ENCODE measurements at regions of chr15 and their contacts with region 1.

Region 1: GRCh38 chr15:65869127-65869953 is at the start of gene RAB11A:
- DNase-seq: peak; percentile 86 to 98 (median 94)
- ATAC-seq: peak; percentile 88
- H3K4me3 ChIP-seq: peak within 1 kb of the TSS; percentile 84 to 98
- H3K4me3 Mint-ChIP-seq: peak within 1 kb of the TSS; percentile 99
- H3K27ac ChIP-seq: peak within 1 kb of the TSS; percentile 90 to 94
- H3K27ac Mint-ChIP-seq: peak within 1 kb of the TSS; percentile 94
- H3K4me1 ChIP-seq: peaks cover 24% of the 10 kb centered on the region
- H3K4me1 Mint-ChIP-seq: peaks cover 31% of the 10 kb centered on the region
- H3K27me3 ChIP-seq: no peaks in the 10 kb centered on the region
- H3K27me3 Mint-ChIP-seq: no peaks in the 10 kb centered on the region
- CTCF ChIP-seq: peak; percentile 42
- total RNA-seq, gene RAB11A: 85.9 to 88.3 TPM

Region 2: GRCh38 chr15:65286704-65287519 is 582.4 kb before region 1 on chr15 and contains the start of gene PARP16:
- CTCF ChIA-PET with region 1: no interaction called
- POLR2A ChIA-PET with region 1: no interaction called
- intact Hi-C with region 1: loop called in 1 of 2 experiments (anchors 2 kb)
- DNase-seq: peak; percentile 80 to 97 (median 92)
- ATAC-seq: peak; percentile 94
- H3K4me3 ChIP-seq: peak within 1 kb of the TSS; percentile 71 to 88
- H3K4me3 Mint-ChIP-seq: peak within 1 kb of the TSS; percentile 90
- H3K27ac ChIP-seq: peak within 1 kb of the TSS; percentile 69 to 81
- H3K27ac Mint-ChIP-seq: peak within 1 kb of the TSS; percentile 86
- H3K4me1 ChIP-seq: peaks cover 27% of the 10 kb centered on the region
- H3K4me1 Mint-ChIP-seq: peaks cover 45% of the 10 kb centered on the region
- H3K27me3 ChIP-seq: no peaks in the 10 kb centered on the region
- H3K27me3 Mint-ChIP-seq: no peaks in the 10 kb centered on the region
- CTCF ChIP-seq: no peak
- total RNA-seq, gene PARP16: 9.9 to 11.5 TPM

Region 3: GRCh38 chr15:65530314-65531122 is 338.8 kb before region 1 on chr15 and contains the start of gene HACD3:
- CTCF ChIA-PET with region 1: interaction called, 3 read pairs
- POLR2A ChIA-PET with region 1: interaction called, 3 read pairs
- intact Hi-C with region 1: loop called (anchors 5 kb)
- DNase-seq: peak; percentile 75 to 93 (median 88)
- ATAC-seq: peak; percentile 96
- H3K4me3 ChIP-seq: peak within 1 kb of the TSS; percentile 67 to 97
- H3K4me3 Mint-ChIP-seq: peak within 1 kb of the TSS; percentile 88
- H3K27ac ChIP-seq: peak within 1 kb of the TSS; percentile 68 to 76
- H3K27ac Mint-ChIP-seq: peak within 1 kb of the TSS; percentile 91
- H3K4me1 ChIP-seq: peaks cover 20% of the 10 kb centered on the region
- H3K4me1 Mint-ChIP-seq: peaks cover 39% of the 10 kb centered on the region
- H3K27me3 ChIP-seq: no peaks in the 10 kb centered on the region
- H3K27me3 Mint-ChIP-seq: no peaks in the 10 kb centered on the region
- CTCF ChIP-seq: no peak
- total RNA-seq, gene HACD3: 16.8 to 17.0 TPM

Region 4: GRCh38 chr15:65818927-65819562 is 50.3 kb before region 1 on chr15:
- CTCF ChIA-PET with region 1: interaction called, 3 read pairs
- POLR2A ChIA-PET with region 1: interaction called, 8 read pairs
- intact Hi-C with region 1: loop called in 1 of 2 experiments (anchors 1 kb)
- DNase-seq: peak in 2 of 9 experiments; percentile 86 to 94
- ATAC-seq: peak; percentile 90
- H3K4me3 ChIP-seq: peak overlapping the region in 1 of 2 experiments; percentile 2
- H3K4me3 Mint-ChIP-seq: peak overlapping the region; percentile 59
- H3K27ac ChIP-seq: peak overlapping the region; percentile 84 to 88
- H3K27ac Mint-ChIP-seq: peak overlapping the region; percentile 92
- H3K4me1 ChIP-seq: peaks cover 39% of the 10 kb centered on the region
- H3K4me1 Mint-ChIP-seq: peaks cover 49% of the 10 kb centered on the region
- H3K27me3 ChIP-seq: no peaks in the 10 kb centered on the region
- H3K27me3 Mint-ChIP-seq: no peaks in the 10 kb centered on the region
- CTCF ChIP-seq: no peak

Region 5: GRCh38 chr15:65881766-65882434 is 12.6 kb after region 1 on chr15:
- CTCF ChIA-PET with region 1: interaction called, 7 read pairs
- POLR2A ChIA-PET with region 1: interaction called, 15 read pairs
- intact Hi-C with region 1: loop called (anchors 1 kb)
- DNase-seq: peak in 1 of 9 experiments; percentile 23
- ATAC-seq: peak; percentile 31
- H3K4me3 ChIP-seq: no peak overlapping the region
- H3K4me3 Mint-ChIP-seq: peak overlapping the region; percentile 56
- H3K27ac ChIP-seq: peak overlapping the region in 1 of 2 experiments; percentile 33
- H3K27ac Mint-ChIP-seq: peak overlapping the region; percentile 66
- H3K4me1 ChIP-seq: peaks cover 37% of the 10 kb centered on the region
- H3K4me1 Mint-ChIP-seq: peaks cover 57% of the 10 kb centered on the region
- H3K27me3 ChIP-seq: no peaks in the 10 kb centered on the region
- H3K27me3 Mint-ChIP-seq: no peaks in the 10 kb centered on the region
- CTCF ChIP-seq: no peak

Region 6: DNA sequence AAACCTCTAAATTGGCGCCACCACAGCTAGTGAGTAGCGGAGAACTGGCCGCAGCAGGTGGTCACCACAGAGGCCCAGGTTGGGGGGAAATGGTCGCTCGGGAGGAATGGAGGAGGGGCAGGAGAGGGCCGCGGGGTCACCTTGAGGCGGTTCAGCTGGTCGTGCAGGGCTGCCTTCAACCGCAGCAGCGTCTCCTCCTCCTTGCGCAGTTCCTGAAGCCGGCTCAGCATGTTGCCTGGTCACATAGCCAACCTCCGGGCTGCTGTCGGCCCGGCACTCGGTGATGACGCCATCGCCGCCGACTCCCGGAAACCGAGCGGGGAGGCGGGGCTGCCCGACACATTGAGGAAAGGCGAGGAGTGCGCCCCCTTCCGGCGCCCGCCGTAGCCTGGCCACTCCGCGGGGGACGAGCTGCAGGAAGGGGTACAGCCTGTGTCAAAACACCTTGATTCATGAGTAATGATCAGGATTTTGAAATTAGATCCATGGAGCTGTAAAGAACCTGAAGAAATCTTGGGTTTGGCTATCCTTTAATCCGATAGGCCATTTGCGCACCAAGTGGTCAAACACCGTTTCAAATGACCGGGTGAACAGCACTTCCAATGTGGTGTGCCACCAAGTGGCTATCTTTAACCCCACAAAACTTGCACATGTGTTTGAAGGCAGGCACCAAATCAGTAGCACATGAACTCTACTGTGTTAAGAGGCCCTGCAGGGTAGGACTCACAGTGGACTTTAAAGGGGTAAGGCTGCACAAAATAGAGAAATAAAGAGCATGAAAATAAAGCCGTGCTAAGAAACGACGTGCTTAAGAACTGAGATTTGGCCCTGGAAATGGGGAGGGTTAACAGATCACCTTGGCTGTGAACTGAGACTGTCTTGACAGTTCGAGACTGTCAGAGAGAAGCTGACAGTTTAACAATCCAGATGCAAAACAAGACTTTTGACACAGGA is 628.4 kb after region 1 on chr15 and contains the start of gene SNAPC5:
- CTCF ChIA-PET with region 1: no interaction called
- POLR2A ChIA-PET with region 1: no interaction called
- intact Hi-C with region 1: loop called in 1 of 2 experiments (anchors 1 kb)
- DNase-seq: peak; percentile 95 to 99 (median 97)
- ATAC-seq: peak; percentile 94
- H3K4me3 ChIP-seq: peak within 1 kb of the TSS; percentile 89 to 98
- H3K4me3 Mint-ChIP-seq: peak within 1 kb of the TSS; percentile 96
- H3K27ac ChIP-seq: peak within 1 kb of the TSS; percentile 93 to 96
- H3K27ac Mint-ChIP-seq: peak within 1 kb of the TSS; percentile 97
- H3K4me1 ChIP-seq: peaks cover 32% of the 10 kb centered on the region
- H3K4me1 Mint-ChIP-seq: peaks cover 57% of the 10 kb centered on the region
- H3K27me3 ChIP-seq: no peaks in the 10 kb centered on the region
- H3K27me3 Mint-ChIP-seq: no peaks in the 10 kb centered on the region
- CTCF ChIP-seq: peak; percentile 98
- total RNA-seq, gene SNAPC5: 22.3 to 25.3 TPM